Right cardiac atrium (tissue), 5 donors: ENCODE measurements at regions of chr11 and their contacts with region 1.

Region 1: GRCh38 chr11:36702330-36703055 is 104.5 kb upstream of the RAG2 start:
- DNase-seq: no peak
- ATAC-seq: peak; percentile 87 to 93
- H3K4me3 ChIP-seq: no peak overlapping the region
- H3K27ac ChIP-seq: peak overlapping the region; percentile 62
- H3K4me1 ChIP-seq: no peaks in the 10 kb centered on the region
- H3K27me3 ChIP-seq: no peaks in the 10 kb centered on the region

Region 2: GRCh38 chr11:36638556-36638955 is 63.9 kb before region 1 on chr11:
- intact Hi-C with region 1: no loop called
- DNase-seq: no peak
- ATAC-seq: no peak
- H3K4me3 ChIP-seq: no peak overlapping the region
- H3K27ac ChIP-seq: no peak overlapping the region
- H3K4me1 ChIP-seq: no peaks in the 10 kb centered on the region
- H3K27me3 ChIP-seq: no peaks in the 10 kb centered on the region

Region 3: DNA sequence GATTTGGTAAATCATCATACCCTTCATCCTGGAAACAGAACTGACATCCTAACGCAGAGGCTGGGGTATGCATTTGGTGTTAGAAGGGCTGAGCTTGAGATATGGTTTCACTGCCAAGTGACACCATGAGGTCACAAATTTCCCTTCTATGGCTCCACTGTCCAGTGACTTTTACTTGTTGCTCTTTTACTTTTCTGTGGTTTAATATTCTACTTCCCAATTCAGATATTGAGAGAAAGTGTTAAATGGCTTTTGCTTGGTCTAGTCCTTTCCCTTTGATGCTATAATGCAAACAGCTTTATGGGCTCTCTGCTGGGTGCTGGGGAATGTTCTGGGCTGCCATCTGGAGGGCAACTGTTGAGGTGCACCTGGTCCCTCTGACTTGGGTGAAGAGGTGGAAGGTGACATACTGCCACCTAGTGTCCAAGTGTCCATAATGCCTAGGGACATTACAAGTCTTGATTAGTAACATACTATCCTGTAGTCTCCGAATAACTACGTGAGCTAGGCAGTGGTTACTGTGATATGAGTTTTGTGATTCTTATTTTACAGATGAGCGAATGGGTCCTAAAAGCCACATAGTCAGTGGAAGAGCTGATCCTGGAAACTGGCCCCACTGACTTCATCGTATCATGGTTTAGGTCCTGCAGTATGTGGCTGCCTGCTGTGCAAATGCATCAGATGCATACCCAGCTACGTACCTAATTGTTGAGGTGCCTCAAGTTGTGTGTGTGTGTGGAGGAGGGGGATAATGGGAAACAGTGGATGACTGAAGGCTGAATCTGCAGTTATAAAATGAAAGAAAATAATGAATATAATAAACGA is 44.6 kb after region 1 on chr11:
- intact Hi-C with region 1: loop called (anchors 2 to 5 kb)
- DNase-seq: peak; percentile 72 to 94 (median 92)
- ATAC-seq: peak; percentile 95 to 96
- H3K4me3 ChIP-seq: no peak overlapping the region
- H3K27ac ChIP-seq: no peak overlapping the region
- H3K4me1 ChIP-seq: no peaks in the 10 kb centered on the region
- H3K27me3 ChIP-seq: no peaks in the 10 kb centered on the region